ENCODE measurements at regions of chr21 and their contacts with region 1.

Region 1: DNA sequence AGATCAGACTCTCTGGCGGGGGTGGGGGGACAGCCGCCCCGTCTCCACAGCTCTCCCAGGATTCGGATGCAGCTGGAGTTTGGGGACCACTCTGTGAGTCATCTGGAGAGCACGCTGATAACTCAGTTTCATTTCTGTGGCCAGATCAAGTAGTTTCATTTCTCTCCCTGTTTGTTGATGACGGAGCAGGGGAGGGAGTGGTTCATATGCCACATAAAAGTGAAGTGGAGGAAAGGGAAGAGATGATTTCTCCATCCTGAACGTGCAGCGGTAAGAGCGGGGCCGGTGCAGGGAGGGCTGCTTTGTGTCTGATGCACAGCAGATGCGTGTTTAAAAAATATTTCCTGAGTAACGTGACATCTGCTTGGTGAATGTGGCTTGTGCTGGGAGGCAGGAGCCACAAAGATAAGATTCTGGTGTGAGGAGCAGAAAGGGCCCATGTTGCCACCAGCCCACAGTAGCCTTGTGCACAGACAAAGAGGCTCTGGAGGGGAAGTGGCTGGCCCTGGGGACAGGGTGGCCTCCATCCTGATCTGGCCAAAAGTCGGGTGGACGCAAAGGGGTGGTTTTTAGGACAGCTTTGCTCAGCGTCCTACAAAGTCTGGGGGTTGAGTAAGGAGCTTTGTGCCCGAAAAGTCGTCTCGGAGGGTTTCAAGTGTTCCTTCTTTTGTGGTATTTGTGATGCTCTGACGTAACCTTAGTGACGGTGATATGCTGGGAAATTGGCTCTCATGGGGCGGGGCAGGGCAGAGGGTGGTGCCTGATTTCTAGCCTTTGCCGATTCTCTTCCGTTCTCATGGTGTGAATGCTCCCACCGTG is at the start of gene MX2:
- DNase-seq: peak; percentile 92 to 96 (median 94)
- H3K4me3 ChIP-seq: peak within 1 kb of the TSS; percentile 56 to 83 (median 78)
- H3K4me3 Mint-ChIP-seq: peak within 1 kb of the TSS; percentile 97 to 100
- H3K27ac ChIP-seq: peak within 1 kb of the TSS; percentile 99 to 100
- H3K27ac Mint-ChIP-seq: peak within 1 kb of the TSS; percentile 100
- H3K4me1 ChIP-seq: peaks cover 48 to 56% of the 10 kb centered on the region in 2 donors
- H3K4me1 Mint-ChIP-seq: peaks cover 60% of the 10 kb centered on the region
- H3K27me3 ChIP-seq: no peaks in the 10 kb centered on the region
- H3K27me3 Mint-ChIP-seq: peaks cover 0 to 2% (median 1%) of the 10 kb centered on the region in 3 donors
- CTCF ChIP-seq: no peak
- polyA plus RNA-seq, gene MX2: 43.1 to 79.4 (median 50.3) TPM

Region 2: DNA sequence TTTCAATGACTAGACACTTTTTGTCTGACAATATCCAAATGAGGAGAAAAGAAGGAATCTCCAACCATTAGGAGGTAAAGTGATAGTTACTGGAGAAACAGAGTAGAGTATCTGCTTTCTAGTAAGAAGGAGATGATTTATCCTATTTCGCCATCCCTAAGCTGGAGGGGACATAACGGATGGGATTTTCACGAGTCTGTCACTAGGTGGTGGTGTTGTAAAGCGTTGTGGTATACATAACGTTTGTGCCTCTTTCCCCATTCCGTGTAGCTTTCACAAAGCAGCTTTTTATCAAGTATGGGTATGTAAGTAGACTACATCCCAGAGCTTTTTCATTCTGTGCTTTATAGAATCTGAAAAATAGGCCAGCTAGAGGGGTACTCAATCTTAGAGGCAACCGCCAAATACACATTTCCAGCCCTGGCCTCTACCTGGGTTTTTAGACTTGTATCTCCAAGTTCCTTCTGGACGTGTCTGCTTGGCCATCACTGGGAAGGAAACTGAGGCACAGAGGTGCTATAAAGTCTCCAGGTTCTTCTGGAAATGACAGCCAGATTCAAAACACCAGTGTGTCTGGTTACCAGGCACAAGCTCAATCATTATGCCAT is 78.7 kb before region 1 on chr21:
- intact Hi-C with region 1: no loop called
- DNase-seq: peak; percentile 65 to 77 (median 73)
- H3K4me3 ChIP-seq: no peak overlapping the region
- H3K4me3 Mint-ChIP-seq: no peak overlapping the region
- H3K27ac ChIP-seq: no peak overlapping the region
- H3K27ac Mint-ChIP-seq: no peak overlapping the region
- H3K4me1 ChIP-seq: no peaks in the 10 kb centered on the region
- H3K4me1 Mint-ChIP-seq: no peaks in the 10 kb centered on the region
- H3K27me3 ChIP-seq: peaks cover 9 to 10% of the 10 kb centered on the region in 2 donors
- H3K27me3 Mint-ChIP-seq: peaks cover 6 to 9% (median 7%) of the 10 kb centered on the region in 3 donors
- CTCF ChIP-seq: peak; percentile 82

Region 3: GRCh38 chr21:41419911-41420862 is 58.2 kb after region 1 on chr21:
- intact Hi-C with region 1: loop called (anchors 2 to 5 kb)
- DNase-seq: peak; percentile 70 to 80 (median 78)
- H3K4me3 ChIP-seq: peak overlapping the region; percentile 49 to 75 (median 61)
- H3K4me3 Mint-ChIP-seq: peak overlapping the region; percentile 79 to 90
- H3K27ac ChIP-seq: peak overlapping the region; percentile 55 to 86
- H3K27ac Mint-ChIP-seq: peak overlapping the region; percentile 82 to 94 (median 90)
- H3K4me1 ChIP-seq: peaks cover 43 to 51% of the 10 kb centered on the region in 2 donors
- H3K4me1 Mint-ChIP-seq: peaks cover 59% of the 10 kb centered on the region
- H3K27me3 ChIP-seq: no peaks in the 10 kb centered on the region
- H3K27me3 Mint-ChIP-seq: peaks cover 0 to 5% (median 1%) of the 10 kb centered on the region in 3 donors
- CTCF ChIP-seq: no peak

Region 4: DNA sequence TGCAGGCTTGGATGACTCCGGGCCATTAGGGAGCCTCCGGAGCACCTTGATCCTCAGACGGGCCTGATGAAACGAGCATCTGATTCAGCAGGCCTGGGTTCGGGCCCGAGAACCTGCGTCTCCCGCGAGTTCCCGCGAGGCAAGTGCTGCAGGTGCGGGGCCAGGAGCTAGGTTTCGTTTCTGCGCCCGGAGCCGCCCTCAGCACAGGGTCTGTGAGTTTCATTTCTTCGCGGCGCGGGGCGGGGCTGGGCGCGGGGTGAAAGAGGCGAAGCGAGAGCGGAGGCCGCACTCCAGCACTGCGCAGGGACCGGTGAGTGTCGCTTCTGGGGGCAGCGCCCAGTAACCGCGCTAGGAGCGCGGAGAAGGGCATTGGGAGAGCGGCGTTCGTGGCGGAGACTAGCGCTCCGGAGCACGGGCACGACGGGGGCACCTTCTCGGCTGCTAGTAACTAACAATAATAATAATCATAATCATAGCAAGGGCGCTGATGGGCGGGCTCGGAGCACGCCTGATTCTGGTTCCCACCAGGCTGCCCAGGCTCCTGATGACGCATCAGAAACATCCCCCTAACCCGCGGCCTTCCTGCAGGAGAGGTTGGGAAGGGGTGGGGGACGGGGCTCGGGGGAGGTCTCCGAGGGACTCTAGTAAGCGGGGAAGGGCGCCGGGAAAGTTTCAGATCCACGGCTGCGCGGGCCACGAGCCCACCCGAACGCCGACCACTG is 64.1 kb after region 1 on chr21 and contains the start of gene MX1:
- intact Hi-C with region 1: loop called (anchors 2 to 5 kb)
- DNase-seq: peak; percentile 57 to 61 (median 58)
- H3K4me3 ChIP-seq: peak within 1 kb of the TSS; percentile 83 to 93 (median 88)
- H3K4me3 Mint-ChIP-seq: peak within 1 kb of the TSS; percentile 97
- H3K27ac ChIP-seq: peak within 1 kb of the TSS; percentile 30 to 81
- H3K27ac Mint-ChIP-seq: peak within 1 kb of the TSS; percentile 79 to 95 (median 92)
- H3K4me1 ChIP-seq: peaks cover 33 to 46% of the 10 kb centered on the region in 2 donors
- H3K4me1 Mint-ChIP-seq: peaks cover 63% of the 10 kb centered on the region
- H3K27me3 ChIP-seq: peaks cover 0 to 7% of the 10 kb centered on the region in 2 donors
- H3K27me3 Mint-ChIP-seq: peaks cover 2 to 18% (median 12%) of the 10 kb centered on the region in 3 donors
- CTCF ChIP-seq: no peak
- polyA plus RNA-seq, gene MX1: 42.7 to 73.3 (median 60.5) TPM